T-cell (primary cell): ENCODE measurements at regions of chr7 and their contacts with region 1.

Region 1: DNA sequence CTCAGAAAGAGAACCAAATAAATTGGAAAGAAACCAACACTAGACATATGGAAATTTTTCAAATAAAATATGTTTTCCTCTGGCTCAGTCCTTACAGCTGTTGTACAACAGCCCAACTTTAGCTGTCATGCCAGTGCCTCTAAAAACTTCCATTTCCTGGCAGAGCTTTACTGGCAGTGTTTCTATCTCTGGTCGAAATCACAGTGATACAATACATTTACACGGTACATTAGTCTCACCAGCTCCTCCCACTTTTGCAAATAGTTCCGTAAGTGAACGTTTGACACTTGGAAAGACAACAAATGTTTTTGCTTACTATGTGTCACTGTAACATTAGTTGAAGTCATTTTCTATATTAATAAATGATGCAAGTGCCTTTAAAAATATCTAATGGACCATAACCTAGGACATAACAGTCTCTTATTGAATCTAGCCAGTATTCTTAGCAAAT is 29.8 kb downstream of the BCAP29 start:
- DNase-seq: no peak
- ATAC-seq: no peak
- H3K4me3 ChIP-seq: no peak overlapping the region
- H3K4me3 Mint-ChIP-seq: no peak overlapping the region
- H3K27ac ChIP-seq: no peak overlapping the region
- H3K27ac Mint-ChIP-seq: no peak overlapping the region
- H3K4me1 ChIP-seq: no peaks in the 10 kb centered on the region
- H3K4me1 Mint-ChIP-seq: no peaks in the 10 kb centered on the region
- H3K27me3 ChIP-seq: no peaks in the 10 kb centered on the region
- H3K27me3 Mint-ChIP-seq: no peaks in the 10 kb centered on the region

Region 2: GRCh38 chr7:107530751-107531150 is 79.1 kb before region 1 on chr7:
- CTCF ChIA-PET with region 1: no interaction called
- POLR2A ChIA-PET with region 1: interaction called in 1 of 2 experiments, 17 read pairs
- DNase-seq: no peak
- ATAC-seq: no peak
- H3K4me3 ChIP-seq: no peak overlapping the region
- H3K4me3 Mint-ChIP-seq: no peak overlapping the region
- H3K27ac ChIP-seq: no peak overlapping the region
- H3K27ac Mint-ChIP-seq: no peak overlapping the region
- H3K4me1 ChIP-seq: no peaks in the 10 kb centered on the region
- H3K4me1 Mint-ChIP-seq: peaks cover 37 to 53% (median 52%) of the 10 kb centered on the region in 3 donors
- H3K27me3 ChIP-seq: no peaks in the 10 kb centered on the region
- H3K27me3 Mint-ChIP-seq: no peaks in the 10 kb centered on the region